Common myeloid progenitor, CD34-positive (primary cell): ENCODE measurements at regions of chr1 and their contacts with region 1.

Region 1: DNA sequence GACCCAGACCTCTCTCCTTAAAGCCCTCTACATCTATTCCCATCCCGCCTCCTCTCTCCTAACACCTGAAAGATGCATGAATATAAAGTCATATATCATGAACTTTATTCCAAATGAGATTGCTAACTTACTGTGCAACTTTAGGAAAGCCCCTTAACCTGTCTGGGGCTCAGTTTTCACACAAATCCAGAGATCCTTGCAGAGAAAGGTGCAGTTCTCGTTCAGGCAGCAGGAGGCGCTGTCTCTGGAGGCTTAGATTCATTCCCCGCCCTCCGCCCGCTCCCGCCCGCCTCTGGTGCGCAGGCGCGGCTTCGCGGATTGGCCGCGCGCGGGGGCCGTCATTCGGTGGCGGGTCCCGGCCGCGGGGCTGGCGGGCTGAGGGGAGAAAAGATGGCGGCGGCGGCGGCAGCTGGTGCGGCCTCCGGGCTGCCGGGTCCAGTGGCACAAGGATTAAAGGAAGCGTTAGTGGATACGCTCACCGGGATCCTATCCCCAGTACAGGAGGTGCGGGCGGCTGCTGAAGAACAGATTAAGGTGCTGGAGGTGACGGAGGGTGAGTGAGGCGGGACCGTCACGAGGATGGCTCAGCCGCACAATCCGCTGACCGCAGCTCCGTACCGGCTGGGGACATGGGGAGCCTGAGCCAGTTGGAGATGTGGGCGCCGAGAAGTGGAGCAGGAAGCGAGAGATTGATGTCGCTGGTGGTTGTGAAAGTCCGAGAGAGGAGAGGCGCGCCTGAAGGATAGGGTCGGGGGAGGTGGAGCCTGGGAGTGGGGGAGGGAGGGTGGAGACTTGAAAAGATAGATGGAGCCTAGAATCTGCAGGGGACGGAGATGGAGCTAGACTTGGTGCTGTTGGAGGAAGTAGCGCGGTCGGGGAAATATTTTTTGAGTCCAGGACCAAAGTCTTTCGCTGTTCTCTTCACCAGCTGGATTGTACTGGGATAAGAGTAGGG is at the start of gene IPO9:
- DNase-seq: peak; percentile 93 to 98 (median 96)
- H3K4me3 ChIP-seq: peak within 1 kb of the TSS; percentile 83 to 98 (median 94)
- H3K27ac ChIP-seq: peak within 1 kb of the TSS; percentile 85 to 90
- H3K4me1 ChIP-seq: peaks cover 9 to 24% (median 22%) of the 10 kb centered on the region in 4 experiments
- H3K27me3 ChIP-seq: no peaks in the 10 kb centered on the region

Region 2: GRCh38 chr1:201468844-201469511 is 360.1 kb before region 1 on chr1 and contains the start of gene PHLDA3:
- CTCF ChIA-PET with region 1: no interaction called
- POLR2A ChIA-PET with region 1: no interaction called
- DNase-seq: peak; percentile 70 to 92 (median 90)
- H3K4me3 ChIP-seq: peak within 1 kb of the TSS; percentile 22 to 78 (median 63)
- H3K27ac ChIP-seq: no peak within 1 kb of the TSS
- H3K4me1 ChIP-seq: peaks cover 0 to 25% (median 20%) of the 10 kb centered on the region in 4 experiments
- H3K27me3 ChIP-seq: peaks cover 0 to 11% (median 5%) of the 10 kb centered on the region in 5 experiments

Region 3: DNA sequence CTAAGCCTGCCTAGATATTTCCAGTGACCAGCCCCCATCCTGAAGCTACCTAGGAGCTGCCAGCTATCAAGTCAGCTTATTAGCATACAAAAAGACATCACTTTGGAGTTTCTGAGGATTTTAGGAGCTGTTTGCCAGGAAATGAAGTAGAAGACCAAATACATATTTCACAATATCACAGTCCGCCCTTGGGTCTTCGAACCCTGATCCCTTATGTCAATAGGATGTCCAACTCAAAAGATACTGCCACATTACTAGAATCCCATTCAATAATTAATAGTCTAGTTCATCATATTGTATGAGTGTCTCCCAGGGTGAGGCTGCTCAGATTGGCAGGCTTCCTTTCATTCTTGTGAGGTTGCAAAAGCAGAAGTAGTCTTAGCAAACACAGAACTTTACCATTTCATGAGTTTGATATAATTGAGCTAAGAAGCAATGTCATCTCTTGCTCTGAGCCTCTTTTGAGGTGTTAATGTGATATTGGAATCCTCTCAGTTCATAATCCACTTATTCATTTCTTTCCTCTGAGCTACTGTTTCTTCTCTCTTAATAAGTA is 13.5 kb after region 1 on chr1:
- CTCF ChIA-PET with region 1: interaction called, 25 read pairs
- POLR2A ChIA-PET with region 1: interaction called, 4 read pairs
- DNase-seq: peak; percentile 17 to 75 (median 70)
- H3K4me3 ChIP-seq: no peak overlapping the region
- H3K27ac ChIP-seq: no peak overlapping the region
- H3K4me1 ChIP-seq: peaks cover 3 to 16% (median 8%) of the 10 kb centered on the region in 4 experiments
- H3K27me3 ChIP-seq: no peaks in the 10 kb centered on the region

Region 4: GRCh38 chr1:201850053-201850397 is 20.9 kb after region 1 on chr1:
- CTCF ChIA-PET with region 1: interaction called, 25 read pairs
- POLR2A ChIA-PET with region 1: interaction called, 4 read pairs
- DNase-seq: no peak
- H3K4me3 ChIP-seq: no peak overlapping the region
- H3K27ac ChIP-seq: no peak overlapping the region
- H3K4me1 ChIP-seq: no peaks in the 10 kb centered on the region
- H3K27me3 ChIP-seq: no peaks in the 10 kb centered on the region